K562 (cell line): ENCODE measurements at regions of chr1 and their contacts with region 1.

Region 1: DNA sequence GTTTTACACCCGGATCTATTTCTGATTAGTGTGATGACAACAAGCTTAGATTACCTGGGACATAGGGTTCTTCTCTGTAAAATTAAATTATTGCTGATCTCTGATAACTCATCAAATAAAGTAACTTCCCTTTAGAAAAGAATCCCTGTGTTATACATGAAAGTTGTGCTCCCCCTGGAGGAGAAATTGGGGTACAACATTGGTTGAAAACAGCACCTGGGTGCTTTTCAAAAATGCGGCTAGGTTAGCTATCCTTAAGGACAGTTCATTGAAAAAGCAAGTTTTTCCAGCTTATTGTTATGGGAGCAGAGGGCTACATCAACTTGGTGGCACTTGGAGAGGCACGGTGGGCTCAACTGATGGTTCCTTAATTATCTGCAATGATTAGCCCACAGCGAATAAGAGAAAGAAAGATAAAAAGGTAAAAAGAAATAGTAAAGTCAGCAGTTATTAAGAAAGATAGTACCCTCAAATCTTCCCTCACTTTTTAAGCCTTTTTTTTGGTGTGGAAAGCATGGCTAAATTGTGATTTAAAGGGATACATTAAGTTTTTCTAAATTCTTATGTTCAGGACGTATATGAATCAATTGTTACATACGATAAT is 97.8 kb downstream of the FMN2 start:
- DNase-seq: peak; percentile 35 to 50 (median 47)
- ATAC-seq: peak; percentile 70; the same call in 1 of the 3 replicates
- H3K4me3 ChIP-seq: no peak overlapping the region
- H3K27ac ChIP-seq: no peak overlapping the region
- H3K4me1 ChIP-seq: no peaks in the 10 kb centered on the region
- H3K27me3 ChIP-seq: no peaks in the 10 kb centered on the region
- CTCF ChIP-seq: peak; percentile 42 to 65 (median 59); a peak in 5 of 6 replicates
- EP300 ChIP-seq: no peak
- POLR2A ChIP-seq: no peak
- RAD21 ChIP-seq: peak; percentile 35 to 49; a peak in 3 of 4 replicates

Region 2: GRCh38 chr1:240027059-240027462 is 162.4 kb before region 1 on chr1:
- CTCF ChIA-PET with region 1: interaction called, 3 read pairs
- POLR2A ChIA-PET with region 1: no interaction called
- in situ Hi-C with region 1: no loop called
- intact Hi-C with region 1: loop called (anchors 1 kb)
- DNase-seq: peak; percentile 32 to 42 (median 39)
- ATAC-seq: peak; percentile 73
- H3K4me3 ChIP-seq: no peak overlapping the region
- H3K27ac ChIP-seq: no peak overlapping the region
- H3K4me1 ChIP-seq: no peaks in the 10 kb centered on the region
- H3K27me3 ChIP-seq: no peaks in the 10 kb centered on the region
- CTCF ChIP-seq: peak; percentile 48 to 68 (median 66)
- EP300 ChIP-seq: no peak
- POLR2A ChIP-seq: no peak
- RAD21 ChIP-seq: peak; percentile 31 to 49

Region 3: GRCh38 chr1:240399381-240399780 is 209.9 kb after region 1 on chr1:
- CTCF ChIA-PET with region 1: no interaction called
- POLR2A ChIA-PET with region 1: no interaction called
- in situ Hi-C with region 1: no loop called
- intact Hi-C with region 1: no loop called
- DNase-seq: peak in 2 of 4 experiments; percentile 11 to 17
- ATAC-seq: peak; percentile 72
- H3K4me3 ChIP-seq: no peak overlapping the region
- H3K27ac ChIP-seq: no peak overlapping the region
- H3K4me1 ChIP-seq: no peaks in the 10 kb centered on the region
- H3K27me3 ChIP-seq: no peaks in the 10 kb centered on the region
- CTCF ChIP-seq: no peak
- EP300 ChIP-seq: no peak
- POLR2A ChIP-seq: no peak
- RAD21 ChIP-seq: no peak

Region 4: GRCh38 chr1:240691521-240692338 is 502.2 kb after region 1 on chr1:
- CTCF ChIA-PET with region 1: interaction called, 3 read pairs
- POLR2A ChIA-PET with region 1: no interaction called
- in situ Hi-C with region 1: no loop called
- intact Hi-C with region 1: loop called (anchors 5 kb)
- DNase-seq: peak in 1 of 4 experiments; percentile 3
- ATAC-seq: no peak
- H3K4me3 ChIP-seq: no peak overlapping the region
- H3K27ac ChIP-seq: no peak overlapping the region
- H3K4me1 ChIP-seq: no peaks in the 10 kb centered on the region
- H3K27me3 ChIP-seq: no peaks in the 10 kb centered on the region; a peak in 1 of 5 replicates
- CTCF ChIP-seq: peak in 2 of 3 experiments; percentile 18 to 27; a peak in 2 of 6 replicates
- EP300 ChIP-seq: no peak
- POLR2A ChIP-seq: no peak
- RAD21 ChIP-seq: peak; percentile 47 to 51